Gastrocnemius medialis (tissue), 4 donors: ENCODE measurements at regions of chr17 and their contacts with region 1.

Region 1: DNA sequence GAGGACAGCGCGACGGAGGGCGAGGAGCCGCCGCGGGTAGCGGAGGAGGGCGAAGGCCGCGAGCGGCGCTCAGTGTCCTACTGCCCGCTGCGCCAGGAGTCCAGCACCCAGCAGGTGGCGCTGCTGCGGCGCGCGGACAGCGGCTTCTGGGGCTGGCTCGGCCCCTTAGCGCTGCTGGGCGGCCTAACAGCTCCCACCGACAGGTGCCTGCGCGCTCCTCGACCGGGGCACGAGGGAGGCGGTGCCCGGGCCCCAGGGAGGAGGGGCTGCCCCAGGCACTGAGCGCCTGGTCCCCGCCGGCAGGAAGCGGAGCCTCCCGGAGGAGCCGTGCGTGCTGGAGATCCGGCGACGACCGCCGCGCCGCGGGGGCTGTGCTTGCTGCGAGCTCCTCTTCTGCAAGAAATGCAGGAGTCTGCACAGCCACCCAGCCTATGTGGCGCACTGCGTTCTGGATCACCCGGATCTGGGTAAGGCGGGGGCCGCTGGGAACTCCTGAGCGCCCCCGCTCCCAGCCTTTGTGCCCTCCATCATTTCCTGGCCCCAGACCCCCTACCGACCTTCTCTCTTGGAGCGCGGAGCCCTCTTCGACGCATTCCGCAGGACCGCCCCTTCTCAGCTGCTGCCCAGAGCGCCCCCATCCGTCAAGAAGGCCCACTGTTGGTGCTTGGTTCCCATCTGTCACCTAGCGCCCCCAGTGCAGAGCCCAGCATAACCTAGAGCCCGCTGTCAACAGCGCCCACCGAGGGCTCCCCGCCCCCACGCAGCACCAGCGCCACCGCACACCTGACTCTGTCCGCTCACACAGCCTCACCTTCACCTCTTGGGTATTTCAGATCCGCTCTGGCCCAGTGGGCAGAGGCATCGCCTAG is 3.7 kb downstream of the C17orf50 start:
- DNase-seq: peak; percentile 61 to 82
- ATAC-seq: peak; percentile 90 to 95
- H3K4me3 ChIP-seq: peak overlapping the region; percentile 58 to 72 (median 64)
- H3K27ac ChIP-seq: peak overlapping the region; percentile 13 to 50 (median 42)
- H3K4me1 ChIP-seq: peaks cover 9 to 11% of the 10 kb centered on the region in 2 donors
- H3K27me3 ChIP-seq: no peaks in the 10 kb centered on the region
- CTCF ChIP-seq: peak; percentile 90 to 98 (median 97)
- POLR2A ChIP-seq: no peak

Region 2: DNA sequence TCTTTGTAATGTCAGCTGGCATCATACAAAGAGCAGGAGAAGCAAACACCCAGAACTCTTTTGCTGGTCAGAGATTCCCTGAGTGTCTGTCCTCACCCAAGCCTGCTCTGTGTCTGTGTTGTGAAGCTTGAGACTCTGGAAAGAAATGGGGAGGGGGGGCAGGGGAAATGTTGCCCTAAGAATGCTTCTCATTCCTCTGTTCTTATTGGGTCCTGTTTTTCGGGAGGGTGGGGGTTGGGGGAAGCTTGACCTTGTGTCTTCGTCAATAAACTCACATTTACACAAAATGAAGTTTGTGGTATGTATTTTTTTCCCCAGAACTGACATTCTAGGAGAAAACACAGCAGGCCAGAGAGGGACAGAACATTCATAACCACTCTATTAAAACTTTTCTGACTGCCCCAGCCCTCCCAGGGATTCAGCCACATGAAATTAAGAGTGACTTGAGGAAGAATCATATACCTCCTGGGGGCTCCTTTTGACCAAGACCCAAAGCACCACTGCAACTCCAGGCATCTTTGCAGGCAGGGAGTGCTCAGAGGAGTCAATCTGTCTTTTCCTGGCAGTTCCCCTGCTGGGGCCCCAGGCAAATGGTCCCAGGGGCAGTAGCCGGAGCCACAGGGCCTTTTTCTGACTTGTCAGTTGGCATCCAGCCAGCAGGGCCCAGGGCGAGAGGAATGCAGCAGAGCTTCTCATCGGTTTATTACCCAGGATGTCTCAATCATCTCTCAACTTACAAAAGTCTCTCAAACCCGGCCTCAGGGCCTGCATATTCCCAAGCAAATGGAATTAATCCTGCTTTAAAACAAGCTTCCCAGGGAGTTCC is 38.0 kb before region 1 on chr17:
- in situ Hi-C with region 1: no loop called
- intact Hi-C with region 1: no loop called
- DNase-seq: peak in 1 of 2 donors; percentile 48
- ATAC-seq: no peak
- H3K4me3 ChIP-seq: no peak overlapping the region
- H3K27ac ChIP-seq: no peak overlapping the region
- H3K4me1 ChIP-seq: peaks cover 17 to 25% of the 10 kb centered on the region in 2 donors
- H3K27me3 ChIP-seq: no peaks in the 10 kb centered on the region
- CTCF ChIP-seq: no peak
- POLR2A ChIP-seq: no peak

Region 3: GRCh38 chr17:36034127-36034526 is 269.8 kb after region 1 on chr17:
- in situ Hi-C with region 1: no loop called
- intact Hi-C with region 1: no loop called
- DNase-seq: no peak
- ATAC-seq: no peak
- H3K4me3 ChIP-seq: no peak overlapping the region
- H3K27ac ChIP-seq: no peak overlapping the region
- H3K4me1 ChIP-seq: no peaks in the 10 kb centered on the region
- H3K27me3 ChIP-seq: no peaks in the 10 kb centered on the region
- CTCF ChIP-seq: no peak
- POLR2A ChIP-seq: no peak

Region 4: DNA sequence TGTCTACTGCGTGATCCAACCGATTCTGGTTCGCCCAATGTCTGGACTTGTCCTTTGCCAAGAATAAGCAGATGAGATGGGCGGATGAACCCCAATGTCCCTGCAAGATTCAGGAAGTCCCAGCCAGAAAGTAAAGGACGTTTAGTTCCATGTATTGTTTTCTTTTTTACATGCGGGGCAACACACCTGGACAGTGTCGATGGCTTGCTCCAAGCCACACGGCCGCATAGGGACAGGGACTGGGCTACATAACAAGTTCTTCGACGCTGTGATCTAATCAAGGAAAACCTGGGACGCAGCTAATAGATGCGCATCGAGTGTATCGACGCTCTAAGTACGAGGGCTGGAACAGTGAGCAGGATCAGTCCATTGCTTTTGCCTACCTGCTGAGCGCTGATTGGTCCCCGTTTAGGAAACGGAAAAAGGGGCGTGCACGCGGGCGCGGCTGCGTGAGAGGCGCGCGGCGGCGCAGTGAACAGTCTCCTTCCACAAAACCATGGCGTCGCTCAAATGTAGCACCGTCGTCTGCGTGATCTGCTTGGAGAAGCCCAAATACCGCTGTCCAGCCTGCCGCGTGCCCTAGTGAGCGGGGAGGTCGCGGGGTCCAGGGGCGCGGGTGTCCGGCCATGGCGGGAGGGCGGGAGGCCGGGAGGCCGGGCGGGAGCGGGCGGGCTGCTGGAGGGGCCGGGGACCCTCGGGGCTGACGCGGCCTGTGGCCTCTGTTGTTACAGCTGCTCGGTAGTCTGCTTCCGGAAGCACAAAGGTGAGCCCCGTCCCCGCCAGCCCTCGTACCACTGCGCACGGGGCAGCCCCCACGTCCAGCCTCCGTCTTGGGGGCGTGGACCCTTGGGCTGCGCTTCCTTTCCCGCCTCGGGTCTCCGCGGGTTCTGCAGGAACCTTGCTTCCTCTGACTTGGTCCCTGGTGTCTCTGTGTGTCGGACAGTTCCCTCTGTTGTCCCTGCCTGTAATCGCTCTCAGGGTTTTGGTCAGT is 722.1 kb after region 1 on chr17 and contains the start of gene ZNHIT3:
- in situ Hi-C with region 1: no loop called
- intact Hi-C with region 1: loop called (anchors 5 kb)
- DNase-seq: peak; percentile 84 to 88
- ATAC-seq: peak; percentile 96 to 97
- H3K4me3 ChIP-seq: peak within 1 kb of the TSS; percentile 80 to 92 (median 86)
- H3K27ac ChIP-seq: peak within 1 kb of the TSS; percentile 76 to 91 (median 82)
- H3K4me1 ChIP-seq: peaks cover 24 to 34% of the 10 kb centered on the region in 2 donors
- H3K27me3 ChIP-seq: peaks cover 0 to 3% (median 0%) of the 10 kb centered on the region in 3 donors
- CTCF ChIP-seq: no peak
- POLR2A ChIP-seq: peak; percentile 22 to 42
- total RNA-seq, gene ZNHIT3: 33.4 to 52.7 (median 39.3) TPM